ENCODE measurements at regions of chr13 and their contacts with region 1.

Region 1: GRCh38 chr13:44435142-44435982 is 61.7 kb downstream of the SERP2 start:
- DNase-seq: peak; percentile 99
- H3K4me3 ChIP-seq: peak overlapping the region; percentile 31 to 82 (median 39)
- H3K27ac ChIP-seq: peak overlapping the region; percentile 94 to 99 (median 98)
- H3K4me1 ChIP-seq: peaks cover 14 to 23% of the 10 kb centered on the region in 2 donors
- H3K27me3 ChIP-seq: no peaks in the 10 kb centered on the region
- CTCF ChIP-seq: peak in 1 of 6 experiments; percentile 3
- POLR2A ChIP-seq: peak in 1 of 2 donors; percentile 95

Region 2: DNA sequence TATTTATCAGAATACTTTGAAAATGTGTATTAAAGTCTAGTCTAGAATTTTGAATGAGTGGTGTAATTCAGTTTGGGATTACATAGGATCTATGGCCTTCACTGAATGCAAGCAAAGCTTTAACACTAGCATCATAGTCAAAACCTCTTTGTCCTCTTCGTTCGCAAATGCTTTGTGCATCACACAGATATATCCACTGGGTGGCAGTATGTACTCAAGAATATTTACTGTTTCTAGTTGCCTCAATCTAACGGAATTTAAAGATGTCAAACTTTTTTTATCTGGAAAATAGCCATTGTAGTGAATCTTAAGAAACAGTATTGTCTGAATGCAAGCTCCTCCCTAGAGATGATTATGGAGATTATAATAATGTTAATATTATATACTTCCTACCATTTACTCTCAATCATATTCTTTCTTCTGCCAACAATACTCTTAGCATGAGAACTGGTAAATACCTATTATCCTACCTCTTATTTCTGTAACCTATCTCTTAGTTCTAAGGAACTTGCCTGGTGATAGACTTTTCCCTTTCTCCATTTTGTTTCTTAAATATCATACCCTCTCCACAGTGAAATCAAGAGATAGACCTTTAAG is 529.8 kb before region 1 on chr13:
- intact Hi-C with region 1: loop called (anchors 2 kb)
- DNase-seq: peak; percentile 13 to 14
- H3K4me3 ChIP-seq: no peak overlapping the region
- H3K27ac ChIP-seq: no peak overlapping the region
- H3K4me1 ChIP-seq: no peaks in the 10 kb centered on the region
- H3K27me3 ChIP-seq: no peaks in the 10 kb centered on the region
- CTCF ChIP-seq: peak; percentile 44 to 92 (median 76)
- POLR2A ChIP-seq: no peak

Region 3: GRCh38 chr13:44050450-44051063 is 384.8 kb before region 1 on chr13:
- intact Hi-C with region 1: loop called (anchors 5 kb)
- DNase-seq: no peak
- H3K4me3 ChIP-seq: no peak overlapping the region
- H3K27ac ChIP-seq: no peak overlapping the region
- H3K4me1 ChIP-seq: peaks cover 47 to 50% of the 10 kb centered on the region in 2 donors
- H3K27me3 ChIP-seq: no peaks in the 10 kb centered on the region
- CTCF ChIP-seq: peak; percentile 45 to 76 (median 57)
- POLR2A ChIP-seq: no peak

Region 4: DNA sequence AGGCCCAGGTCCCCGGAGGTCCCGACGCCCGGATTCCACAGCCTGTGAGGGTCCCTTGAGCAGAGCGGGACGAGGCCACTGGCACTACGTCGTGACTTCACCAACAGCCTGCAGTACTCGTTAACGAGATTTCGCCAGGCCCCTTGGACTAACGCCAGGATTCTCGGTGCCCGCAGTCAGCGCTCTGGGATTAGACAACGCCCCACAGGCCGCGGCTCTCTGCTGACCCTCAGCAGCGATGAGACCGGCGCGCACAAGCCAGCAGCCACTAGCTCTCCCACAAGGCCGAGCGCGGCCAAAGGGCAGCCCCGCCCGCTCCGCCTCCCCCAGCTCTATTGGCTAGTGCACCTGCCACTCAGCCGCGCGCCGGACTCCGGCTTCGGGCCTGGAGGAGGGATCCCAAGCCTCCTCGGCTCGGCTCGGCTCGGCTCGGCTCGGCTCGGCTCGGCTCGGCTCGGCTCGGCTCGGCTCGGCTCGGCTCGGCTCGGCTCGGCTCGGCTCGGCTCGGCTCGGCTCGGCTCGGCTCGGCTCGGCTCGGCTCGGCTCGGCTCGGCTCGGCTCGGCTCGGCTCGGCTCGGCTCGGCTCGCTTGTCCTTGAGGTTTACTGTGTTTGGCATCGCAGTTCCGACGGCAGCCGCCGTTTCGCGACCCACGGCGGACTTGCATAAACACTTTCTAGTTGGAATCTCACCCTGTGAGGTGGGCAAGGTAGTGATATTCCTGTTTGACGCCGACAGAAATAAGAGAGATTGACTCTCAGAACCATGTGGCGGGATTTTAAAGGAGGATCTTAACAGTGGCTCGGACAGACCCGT is 293.4 kb before region 1 on chr13:
- intact Hi-C with region 1: loop called (anchors 10 kb)
- DNase-seq: peak; percentile 97 to 98
- H3K4me3 ChIP-seq: peak overlapping the region; percentile 31 to 73 (median 34)
- H3K27ac ChIP-seq: peak overlapping the region; percentile 88 to 96 (median 93)
- H3K4me1 ChIP-seq: peaks cover 6 to 9% of the 10 kb centered on the region in 2 donors
- H3K27me3 ChIP-seq: no peaks in the 10 kb centered on the region
- CTCF ChIP-seq: peak in 4 of 6 experiments; percentile 16 to 40 (median 34)
- POLR2A ChIP-seq: peak; percentile 92 to 97

Region 5: GRCh38 chr13:44191504-44192171 is 243.7 kb before region 1 on chr13:
- intact Hi-C with region 1: loop called (anchors 10 kb)
- DNase-seq: peak; percentile 31 to 53
- H3K4me3 ChIP-seq: no peak overlapping the region
- H3K27ac ChIP-seq: peak overlapping the region in 1 of 3 donors; percentile 47
- H3K4me1 ChIP-seq: no peaks in the 10 kb centered on the region
- H3K27me3 ChIP-seq: no peaks in the 10 kb centered on the region
- CTCF ChIP-seq: peak; percentile 36 to 93 (median 80)
- POLR2A ChIP-seq: no peak

Region 6: GRCh38 chr13:44734201-44734707 is 298.9 kb after region 1 on chr13:
- intact Hi-C with region 1: no loop called
- DNase-seq: peak; percentile 30 to 60
- H3K4me3 ChIP-seq: no peak overlapping the region
- H3K27ac ChIP-seq: peak overlapping the region in 1 of 3 donors; percentile 55
- H3K4me1 ChIP-seq: peaks cover 0 to 7% of the 10 kb centered on the region in 2 donors
- H3K27me3 ChIP-seq: no peaks in the 10 kb centered on the region
- CTCF ChIP-seq: no peak
- POLR2A ChIP-seq: no peak

Measured in thyroid gland (tissue), 4 donors.